Activated T-helper 1 cell treated with anti-CD3 and anti-CD28 coated beads, Interleukin-12 subunit alpha, Interleukin-12 subunit beta, Interleukin-2, Interleukin-4 antibody, amounts not matched to agents 30 ng/mL and 10 ng/mL and 1 ng/mL, durations not matched to agents 14 hours and 24 hours and 36 hours (primary cell): ENCODE measurements at regions of chr4 and their contacts with region 1.

Region 1: DNA sequence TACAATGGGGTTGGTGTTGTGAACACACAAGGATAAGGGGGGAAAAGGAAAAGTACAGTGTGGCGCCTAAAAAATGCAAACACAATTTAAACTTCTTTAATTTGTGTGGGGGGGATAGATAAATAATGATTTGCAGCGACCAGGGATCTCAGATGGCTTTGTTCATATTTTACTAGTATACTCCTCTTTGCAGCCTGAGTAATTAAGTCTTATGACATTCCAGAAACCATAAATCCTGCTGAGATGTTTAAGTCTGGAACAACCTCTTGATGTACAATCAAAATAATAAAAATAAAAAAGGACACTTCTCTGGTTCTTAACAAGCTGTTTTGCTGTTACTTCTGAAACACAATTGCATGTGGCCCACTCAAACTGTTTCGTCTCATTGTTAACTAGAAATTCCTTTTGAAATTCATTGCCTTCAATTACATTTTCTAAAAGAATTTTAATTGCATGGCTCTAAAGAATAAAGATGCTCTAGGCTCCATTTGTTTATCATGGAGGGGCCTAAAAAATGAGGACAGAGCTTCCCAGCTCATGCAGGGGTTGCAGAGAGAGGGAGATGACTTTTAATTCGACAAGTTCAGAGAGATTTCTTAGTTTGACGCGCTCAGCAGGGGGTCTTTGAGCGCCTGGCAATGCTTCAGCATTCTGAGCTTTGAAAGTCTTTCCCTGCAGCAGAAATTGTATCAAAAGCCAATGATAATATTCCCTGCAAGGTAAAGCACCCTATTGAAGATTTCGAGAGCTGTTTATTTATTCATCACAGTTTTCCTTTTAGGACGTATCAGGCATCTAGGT is 892.4 kb upstream of the TENM3 start:
- DNase-seq: no peak
- H3K4me3 Mint-ChIP-seq: no peak overlapping the region
- H3K27ac Mint-ChIP-seq: no peak overlapping the region
- H3K4me1 Mint-ChIP-seq: no peaks in the 10 kb centered on the region
- H3K27me3 Mint-ChIP-seq: no peaks in the 10 kb centered on the region

Region 2: GRCh38 chr4:181331214-181331613 is 19.6 kb before region 1 on chr4:
- intact Hi-C with region 1: no loop called
- DNase-seq: no peak
- H3K4me3 Mint-ChIP-seq: no peak overlapping the region
- H3K27ac Mint-ChIP-seq: no peak overlapping the region
- H3K4me1 Mint-ChIP-seq: no peaks in the 10 kb centered on the region
- H3K27me3 Mint-ChIP-seq: no peaks in the 10 kb centered on the region

Region 3: GRCh38 chr4:181420950-181421349 is 70.1 kb after region 1 on chr4:
- intact Hi-C with region 1: loop called (anchors 2 kb)
- DNase-seq: no peak
- H3K4me3 Mint-ChIP-seq: no peak overlapping the region
- H3K27ac Mint-ChIP-seq: no peak overlapping the region
- H3K4me1 Mint-ChIP-seq: no peaks in the 10 kb centered on the region
- H3K27me3 Mint-ChIP-seq: no peaks in the 10 kb centered on the region